ENCODE measurements at regions of chr17 and their contacts with region 1.

Region 1: GRCh38 chr17:28896884-28897768 is at the start of gene FLOT2:
- H3K4me3 ChIP-seq: peak within 1 kb of the TSS; percentile 88
- H3K27ac ChIP-seq: peak within 1 kb of the TSS; percentile 90
- H3K4me1 ChIP-seq: peaks cover 9% of the 10 kb centered on the region; the same call in 1 of the 2 replicates
- CTCF ChIP-seq: peak; percentile 55

Region 2: GRCh38 chr17:28908640-28909167 is 11.6 kb after region 1 on chr17:
- CTCF ChIA-PET with region 1: interaction called, 22 read pairs
- POLR2A ChIA-PET with region 1: interaction called, 7 read pairs
- H3K4me3 ChIP-seq: no peak overlapping the region
- H3K27ac ChIP-seq: no peak overlapping the region
- H3K4me1 ChIP-seq: no peaks in the 10 kb centered on the region
- CTCF ChIP-seq: no peak

Measured in HEK293 (cell line).